HepG2 (cell line): ENCODE measurements at regions of chr3 and their contacts with region 1.

Region 1: DNA sequence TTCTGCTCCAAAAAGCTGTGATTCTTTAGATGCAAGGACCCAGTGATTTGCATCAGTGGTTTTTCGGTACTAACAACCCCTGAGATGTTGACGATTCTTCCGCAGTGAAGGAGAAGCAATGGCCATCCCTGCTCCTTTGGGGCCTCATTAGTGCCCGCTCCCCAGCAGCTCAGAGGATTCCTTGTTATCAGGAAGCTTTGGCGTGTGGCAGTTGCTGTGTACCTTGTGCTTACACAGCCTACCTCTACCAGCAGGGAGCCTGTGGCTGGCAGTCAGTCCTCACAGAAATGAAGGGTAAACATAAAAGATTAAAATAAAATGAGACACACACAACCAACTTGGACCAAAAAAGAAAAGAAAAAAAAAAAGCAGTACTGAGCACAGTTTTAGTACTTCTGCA is 55.2 kb downstream of the CNTN3 start:
- DNase-seq: no peak
- ATAC-seq: no peak
- H3K4me3 ChIP-seq: no peak overlapping the region
- H3K27ac ChIP-seq: no peak overlapping the region
- H3K4me1 ChIP-seq: no peaks in the 10 kb centered on the region
- H3K27me3 ChIP-seq: no peaks in the 10 kb centered on the region
- CTCF ChIP-seq: no peak
- EP300 ChIP-seq: no peak
- POLR2A ChIP-seq: no peak
- RAD21 ChIP-seq: no peak

Region 2: GRCh38 chr3:74582982-74583381 is 23.7 kb after region 1 on chr3:
- CTCF ChIA-PET with region 1: no interaction called
- POLR2A ChIA-PET with region 1: no interaction called
- in situ Hi-C with region 1: no loop called
- intact Hi-C with region 1: no loop called
- DNase-seq: no peak
- ATAC-seq: no peak
- H3K4me3 ChIP-seq: no peak overlapping the region
- H3K27ac ChIP-seq: no peak overlapping the region
- H3K4me1 ChIP-seq: no peaks in the 10 kb centered on the region
- H3K27me3 ChIP-seq: no peaks in the 10 kb centered on the region
- CTCF ChIP-seq: no peak
- EP300 ChIP-seq: no peak
- POLR2A ChIP-seq: no peak
- RAD21 ChIP-seq: no peak

Region 3: GRCh38 chr3:74614107-74614967 is 55.1 kb after region 1 on chr3 and contains the start of gene CNTN3:
- CTCF ChIA-PET with region 1: no interaction called
- POLR2A ChIA-PET with region 1: no interaction called
- in situ Hi-C with region 1: loop called (anchors 10 kb)
- intact Hi-C with region 1: no loop called
- DNase-seq: no peak
- ATAC-seq: no peak
- H3K4me3 ChIP-seq: no peak within 1 kb of the TSS
- H3K27ac ChIP-seq: no peak within 1 kb of the TSS
- H3K4me1 ChIP-seq: no peaks in the 10 kb centered on the region
- H3K27me3 ChIP-seq: no peaks in the 10 kb centered on the region; a peak in 1 of 5 replicates
- CTCF ChIP-seq: no peak
- EP300 ChIP-seq: no peak
- POLR2A ChIP-seq: no peak
- RAD21 ChIP-seq: no peak
- total RNA-seq, gene CNTN3: not detected in 2 replicates